Breast epithelium (tissue), 4 donors: ENCODE measurements at regions of chr9 and their contacts with region 1.

Region 1: DNA sequence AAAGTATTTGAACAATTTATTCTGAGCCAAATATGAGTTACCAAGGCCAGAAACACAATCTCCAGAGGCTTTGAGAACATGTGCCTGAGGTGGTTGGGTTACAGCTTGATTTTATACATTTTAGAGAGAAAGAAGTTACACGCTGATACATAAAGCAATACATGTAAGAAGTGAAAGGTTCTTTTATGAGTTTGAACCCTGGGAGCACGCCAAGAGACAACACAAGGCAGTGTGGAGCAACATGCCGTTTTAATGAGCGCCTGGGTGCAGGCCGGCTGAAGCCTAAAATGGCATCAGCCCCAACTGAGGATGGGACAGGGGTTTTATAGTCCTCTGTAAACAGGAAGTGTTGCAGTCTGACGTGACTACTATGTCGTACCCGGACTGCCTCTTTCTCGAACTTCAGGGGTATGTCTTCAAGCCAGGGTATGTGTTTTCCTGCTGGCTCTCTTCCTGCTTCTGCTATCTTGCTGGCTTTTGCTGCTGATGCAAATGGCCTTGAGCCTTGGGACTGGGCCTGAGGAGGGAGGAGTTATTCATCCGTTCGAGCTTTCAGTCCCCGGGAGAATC is 193.7 kb downstream of the CYLC2 start:
- DNase-seq: no peak
- H3K4me3 ChIP-seq: no peak overlapping the region
- H3K27ac ChIP-seq: no peak overlapping the region
- H3K4me1 ChIP-seq: no peaks in the 10 kb centered on the region
- H3K27me3 ChIP-seq: no peaks in the 10 kb centered on the region
- CTCF ChIP-seq: no peak
- POLR2A ChIP-seq: no peak

Region 2: GRCh38 chr9:103126494-103126893 is 62.4 kb before region 1 on chr9:
- intact Hi-C with region 1: no loop called
- DNase-seq: no peak
- H3K4me3 ChIP-seq: no peak overlapping the region
- H3K27ac ChIP-seq: no peak overlapping the region
- H3K4me1 ChIP-seq: no peaks in the 10 kb centered on the region
- H3K27me3 ChIP-seq: no peaks in the 10 kb centered on the region
- CTCF ChIP-seq: no peak
- POLR2A ChIP-seq: no peak

Region 3: GRCh38 chr9:103277240-103277639 is 88.4 kb after region 1 on chr9:
- intact Hi-C with region 1: loop called (anchors 5 kb)
- DNase-seq: no peak
- H3K4me3 ChIP-seq: no peak overlapping the region
- H3K27ac ChIP-seq: no peak overlapping the region
- H3K4me1 ChIP-seq: no peaks in the 10 kb centered on the region
- H3K27me3 ChIP-seq: no peaks in the 10 kb centered on the region
- CTCF ChIP-seq: no peak
- POLR2A ChIP-seq: no peak